Caco-2 (cell line): ENCODE measurements at regions of chr22 and their contacts with region 1.

Region 1: GRCh38 chr22:20885557-20886323 is 26.9 kb downstream of the SNAP29 start:
- DNase-seq: peak; percentile 83 to 89
- H3K4me3 ChIP-seq: no peak overlapping the region
- H3K4me3 Mint-ChIP-seq: peak overlapping the region; percentile 63
- H3K27ac Mint-ChIP-seq: peak overlapping the region; percentile 97
- H3K4me1 ChIP-seq: peaks cover 15% of the 10 kb centered on the region; the same call in 1 of the 2 replicates
- H3K4me1 Mint-ChIP-seq: peaks cover 16% of the 10 kb centered on the region
- H3K27me3 ChIP-seq: no peaks in the 10 kb centered on the region
- H3K27me3 Mint-ChIP-seq: no peaks in the 10 kb centered on the region
- CTCF ChIP-seq: peak; percentile 89 to 94

Region 2: GRCh38 chr22:20792947-20793294 is 92.8 kb before region 1 on chr22:
- CTCF ChIA-PET with region 1: interaction called, 11 read pairs
- POLR2A ChIA-PET with region 1: no interaction called
- intact Hi-C with region 1: no loop called
- DNase-seq: no peak
- H3K4me3 ChIP-seq: no peak overlapping the region
- H3K4me3 Mint-ChIP-seq: no peak overlapping the region
- H3K27ac Mint-ChIP-seq: no peak overlapping the region
- H3K4me1 ChIP-seq: peaks cover 5% of the 10 kb centered on the region; the same call in 1 of the 2 replicates
- H3K4me1 Mint-ChIP-seq: no peaks in the 10 kb centered on the region
- H3K27me3 ChIP-seq: no peaks in the 10 kb centered on the region
- H3K27me3 Mint-ChIP-seq: no peaks in the 10 kb centered on the region
- CTCF ChIP-seq: no peak

Region 3: GRCh38 chr22:20867179-20868024 is 18.3 kb before region 1 on chr22:
- CTCF ChIA-PET with region 1: interaction called, 22 read pairs
- POLR2A ChIA-PET with region 1: no interaction called
- intact Hi-C with region 1: loop called (anchors 1 kb)
- DNase-seq: peak; percentile 63
- H3K4me3 ChIP-seq: no peak overlapping the region
- H3K4me3 Mint-ChIP-seq: no peak overlapping the region
- H3K27ac Mint-ChIP-seq: peak overlapping the region; percentile 69
- H3K4me1 ChIP-seq: peaks cover 29% of the 10 kb centered on the region
- H3K4me1 Mint-ChIP-seq: peaks cover 23% of the 10 kb centered on the region
- H3K27me3 ChIP-seq: no peaks in the 10 kb centered on the region
- H3K27me3 Mint-ChIP-seq: no peaks in the 10 kb centered on the region
- CTCF ChIP-seq: no peak

Region 4: GRCh38 chr22:20937031-20937793 is 51.5 kb after region 1 on chr22:
- CTCF ChIA-PET with region 1: interaction called, 11 read pairs
- POLR2A ChIA-PET with region 1: interaction called, 6 read pairs
- intact Hi-C with region 1: no loop called
- DNase-seq: peak; percentile 57 to 58
- H3K4me3 ChIP-seq: no peak overlapping the region
- H3K4me3 Mint-ChIP-seq: peak overlapping the region; percentile 9
- H3K27ac Mint-ChIP-seq: peak overlapping the region; percentile 52
- H3K4me1 ChIP-seq: peaks cover 22% of the 10 kb centered on the region
- H3K4me1 Mint-ChIP-seq: peaks cover 28% of the 10 kb centered on the region
- H3K27me3 ChIP-seq: no peaks in the 10 kb centered on the region
- H3K27me3 Mint-ChIP-seq: no peaks in the 10 kb centered on the region
- CTCF ChIP-seq: no peak

Region 5: GRCh38 chr22:20981787-20982562 is 96.2 kb after region 1 on chr22 and contains the start of gene LZTR1:
- CTCF ChIA-PET with region 1: interaction called, 17 read pairs
- POLR2A ChIA-PET with region 1: no interaction called
- intact Hi-C with region 1: no loop called
- DNase-seq: peak; percentile 78 to 88
- H3K4me3 ChIP-seq: peak within 1 kb of the TSS; percentile 95
- H3K4me3 Mint-ChIP-seq: peak within 1 kb of the TSS; percentile 85
- H3K27ac Mint-ChIP-seq: peak within 1 kb of the TSS; percentile 71
- H3K4me1 ChIP-seq: peaks cover 14% of the 10 kb centered on the region; the same call in 1 of the 2 replicates
- H3K4me1 Mint-ChIP-seq: no peaks in the 10 kb centered on the region
- H3K27me3 ChIP-seq: no peaks in the 10 kb centered on the region
- H3K27me3 Mint-ChIP-seq: no peaks in the 10 kb centered on the region
- CTCF ChIP-seq: peak; percentile 51 to 84
- total RNA-seq, gene LZTR1: 37.2 and 41.3 TPM in 2 replicates